Activated CD4-positive, alpha-beta T cell treated with anti-CD3 and anti-CD28 coated beads for 36 hours (primary cell): ENCODE measurements at regions of chr20 and their contacts with region 1.

Region 1: DNA sequence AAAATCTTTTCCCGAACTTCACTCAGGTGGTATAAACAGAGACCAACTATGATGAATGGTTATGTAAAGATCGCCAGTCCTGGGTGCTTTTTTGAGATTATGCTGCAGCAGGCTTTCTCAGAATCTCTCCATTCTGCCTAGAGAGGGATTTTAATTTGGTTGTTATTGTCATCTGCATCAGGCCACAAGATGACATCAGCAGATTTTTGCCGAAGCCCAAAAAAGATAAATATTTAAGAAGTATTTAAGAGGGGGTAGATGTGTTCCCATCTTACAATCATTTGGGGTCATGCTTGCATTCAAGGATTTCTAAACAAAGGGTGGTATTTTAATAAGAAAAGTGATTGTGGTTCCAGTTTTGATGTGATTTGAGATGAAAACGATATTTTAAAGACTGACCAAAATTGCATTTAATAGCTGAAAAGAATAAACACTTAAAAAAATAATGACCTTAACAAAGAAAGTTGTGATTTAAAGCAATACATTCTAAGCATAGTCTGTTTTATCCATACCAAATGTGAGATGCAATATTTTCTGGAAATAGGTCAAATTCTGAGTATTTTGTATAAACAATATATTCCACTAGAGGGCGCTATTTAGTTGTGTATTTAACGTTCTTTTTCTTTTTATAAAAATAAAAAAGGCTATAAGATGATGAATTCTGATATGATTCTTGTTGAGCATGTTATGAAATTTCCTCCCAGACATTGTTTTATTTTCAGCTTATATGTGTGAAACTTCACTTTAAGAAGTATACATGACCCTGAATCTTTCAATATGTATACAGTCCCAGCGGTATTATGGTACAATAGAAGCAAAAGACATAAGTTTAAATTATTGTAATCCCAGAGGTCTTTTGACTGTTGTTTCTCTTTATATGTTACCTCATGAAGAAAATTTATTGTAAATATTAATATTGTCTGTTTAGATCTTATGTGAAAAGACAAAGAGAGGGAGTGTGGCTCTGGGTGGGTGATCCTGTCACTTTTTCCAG is 51.0 kb upstream of the ZFP64 start:
- DNase-seq: no peak
- ATAC-seq: no peak
- H3K4me3 Mint-ChIP-seq: no peak overlapping the region
- H3K27ac Mint-ChIP-seq: no peak overlapping the region
- H3K4me1 Mint-ChIP-seq: no peaks in the 10 kb centered on the region
- H3K27me3 Mint-ChIP-seq: peaks cover 4% of the 10 kb centered on the region

Region 2: GRCh38 chr20:52127309-52127708 is 115.2 kb before region 1 on chr20:
- CTCF ChIA-PET with region 1: interaction called, 5 read pairs
- POLR2A ChIA-PET with region 1: no interaction called
- intact Hi-C with region 1: loop called in 1 of 2 experiments (anchors 5 kb)
- DNase-seq: no peak
- ATAC-seq: no peak
- H3K4me3 Mint-ChIP-seq: no peak overlapping the region
- H3K27ac Mint-ChIP-seq: no peak overlapping the region
- H3K4me1 Mint-ChIP-seq: peaks cover 2% of the 10 kb centered on the region
- H3K27me3 Mint-ChIP-seq: no peaks in the 10 kb centered on the region

Region 3: GRCh38 chr20:52312132-52312729 is 69.7 kb after region 1 on chr20:
- CTCF ChIA-PET with region 1: interaction called, 6 read pairs
- POLR2A ChIA-PET with region 1: no interaction called
- intact Hi-C with region 1: loop called in 1 of 2 experiments (anchors 2 kb)
- DNase-seq: peak; percentile 68
- ATAC-seq: peak; percentile 82
- H3K4me3 Mint-ChIP-seq: no peak overlapping the region
- H3K27ac Mint-ChIP-seq: no peak overlapping the region
- H3K4me1 Mint-ChIP-seq: peaks cover 20% of the 10 kb centered on the region
- H3K27me3 Mint-ChIP-seq: peaks cover 1% of the 10 kb centered on the region

Region 4: GRCh38 chr20:52361650-52362049 is 119.1 kb after region 1 on chr20:
- CTCF ChIA-PET with region 1: no interaction called
- POLR2A ChIA-PET with region 1: no interaction called
- intact Hi-C with region 1: loop called in 1 of 2 experiments (anchors 5 kb)
- DNase-seq: no peak
- ATAC-seq: no peak
- H3K4me3 Mint-ChIP-seq: no peak overlapping the region
- H3K27ac Mint-ChIP-seq: no peak overlapping the region
- H3K4me1 Mint-ChIP-seq: peaks cover 13% of the 10 kb centered on the region
- H3K27me3 Mint-ChIP-seq: peaks cover 4% of the 10 kb centered on the region

Region 5: DNA sequence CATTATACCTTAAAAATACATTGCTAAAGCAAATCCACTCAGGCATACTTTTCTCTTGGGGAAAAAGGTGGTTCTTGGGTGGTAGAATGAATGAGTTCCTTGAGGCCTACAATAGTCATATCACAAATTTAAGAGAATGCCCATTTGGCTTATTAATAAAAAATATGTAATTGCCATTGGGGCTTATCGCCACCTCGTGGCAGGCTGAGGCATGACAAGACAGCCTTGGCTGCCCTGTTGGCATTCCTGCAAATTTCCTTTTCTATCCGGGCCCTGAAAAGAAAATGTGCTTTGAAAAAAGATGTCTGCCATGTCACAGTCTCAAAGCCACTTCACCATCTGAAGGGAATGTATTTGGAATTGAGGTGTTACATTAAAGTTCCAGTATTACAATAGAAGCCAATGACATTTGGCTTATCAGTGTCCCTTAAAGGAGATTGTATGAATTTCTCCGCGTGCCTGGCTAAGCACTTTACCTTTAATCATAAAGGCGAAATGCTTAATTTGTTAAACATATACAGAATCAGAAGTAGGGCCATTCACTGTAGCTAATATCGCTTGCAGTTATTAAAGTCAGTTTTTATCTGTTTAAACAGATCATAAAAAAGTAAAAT is 137.3 kb after region 1 on chr20:
- CTCF ChIA-PET with region 1: interaction called, 4 read pairs
- POLR2A ChIA-PET with region 1: no interaction called
- intact Hi-C with region 1: loop called (anchors 1 to 2 kb)
- DNase-seq: peak; percentile 54
- ATAC-seq: no peak
- H3K4me3 Mint-ChIP-seq: no peak overlapping the region
- H3K27ac Mint-ChIP-seq: no peak overlapping the region
- H3K4me1 Mint-ChIP-seq: peaks cover 23% of the 10 kb centered on the region
- H3K27me3 Mint-ChIP-seq: no peaks in the 10 kb centered on the region

Region 6: DNA sequence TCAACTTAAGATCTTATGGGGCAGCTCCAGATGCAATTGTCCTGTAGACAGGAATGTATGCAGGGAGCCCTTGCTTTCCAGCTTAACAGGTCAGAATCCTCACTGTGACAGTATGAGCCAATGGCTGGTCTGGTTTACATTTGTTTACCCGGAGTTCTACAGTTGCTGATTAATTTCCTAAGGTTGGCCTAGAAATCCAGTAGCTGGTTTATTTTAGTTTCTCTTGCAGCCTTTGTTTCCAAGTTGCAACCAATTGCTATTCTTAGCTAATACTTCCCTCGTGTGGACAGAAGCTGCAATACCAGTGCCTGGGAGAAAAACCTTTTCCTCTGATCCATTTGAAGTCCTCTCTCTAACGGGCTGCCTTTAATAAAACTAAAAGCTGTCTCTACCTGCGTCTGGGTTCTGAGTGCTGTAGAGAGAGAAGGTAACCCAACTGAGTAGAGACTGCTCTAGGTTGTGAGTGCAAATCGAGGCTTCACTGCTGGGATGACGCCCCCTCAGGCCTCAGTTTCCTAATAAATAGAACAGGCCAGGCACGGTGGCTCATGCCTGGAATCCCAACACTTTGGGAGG is 1305.2 kb after region 1 on chr20:
- CTCF ChIA-PET with region 1: interaction called, 4 read pairs
- POLR2A ChIA-PET with region 1: no interaction called
- intact Hi-C with region 1: loop called (anchors 1 to 5 kb)
- DNase-seq: peak; percentile 63
- ATAC-seq: peak; percentile 55
- H3K4me3 Mint-ChIP-seq: no peak overlapping the region
- H3K27ac Mint-ChIP-seq: no peak overlapping the region
- H3K4me1 Mint-ChIP-seq: peaks cover 2% of the 10 kb centered on the region
- H3K27me3 Mint-ChIP-seq: no peaks in the 10 kb centered on the region

Region 7: DNA sequence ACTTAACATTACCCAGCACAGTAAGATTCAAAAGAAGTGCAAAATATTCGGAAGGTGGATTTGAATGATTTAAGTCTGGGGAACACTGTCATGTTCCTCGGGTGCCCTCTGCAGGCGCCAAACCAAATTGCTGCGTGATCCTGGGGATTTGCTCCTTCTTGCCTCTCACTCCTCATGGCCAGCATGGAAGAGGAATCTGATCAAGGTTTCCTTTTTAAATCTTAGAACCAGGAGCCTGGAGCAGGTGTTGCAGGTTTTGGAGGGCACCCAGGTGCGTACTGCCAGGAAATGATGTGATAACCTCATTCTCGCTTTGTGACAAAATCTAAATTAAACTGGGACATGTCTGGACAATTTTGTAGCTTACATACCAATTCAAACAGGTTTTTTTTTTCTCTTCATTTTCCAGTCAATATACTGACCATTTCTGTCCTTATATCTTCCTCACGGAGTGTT is 1957.2 kb after region 1 on chr20:
- CTCF ChIA-PET with region 1: no interaction called
- POLR2A ChIA-PET with region 1: no interaction called
- intact Hi-C with region 1: loop called (anchors 2 to 5 kb)
- DNase-seq: peak; percentile 81
- ATAC-seq: peak; percentile 57
- H3K4me3 Mint-ChIP-seq: no peak overlapping the region
- H3K27ac Mint-ChIP-seq: no peak overlapping the region
- H3K4me1 Mint-ChIP-seq: no peaks in the 10 kb centered on the region
- H3K27me3 Mint-ChIP-seq: peaks cover 2% of the 10 kb centered on the region